Gastrocnemius medialis (tissue), 4 donors: ENCODE measurements at regions of chr16 and their contacts with region 1.

Region 1: DNA sequence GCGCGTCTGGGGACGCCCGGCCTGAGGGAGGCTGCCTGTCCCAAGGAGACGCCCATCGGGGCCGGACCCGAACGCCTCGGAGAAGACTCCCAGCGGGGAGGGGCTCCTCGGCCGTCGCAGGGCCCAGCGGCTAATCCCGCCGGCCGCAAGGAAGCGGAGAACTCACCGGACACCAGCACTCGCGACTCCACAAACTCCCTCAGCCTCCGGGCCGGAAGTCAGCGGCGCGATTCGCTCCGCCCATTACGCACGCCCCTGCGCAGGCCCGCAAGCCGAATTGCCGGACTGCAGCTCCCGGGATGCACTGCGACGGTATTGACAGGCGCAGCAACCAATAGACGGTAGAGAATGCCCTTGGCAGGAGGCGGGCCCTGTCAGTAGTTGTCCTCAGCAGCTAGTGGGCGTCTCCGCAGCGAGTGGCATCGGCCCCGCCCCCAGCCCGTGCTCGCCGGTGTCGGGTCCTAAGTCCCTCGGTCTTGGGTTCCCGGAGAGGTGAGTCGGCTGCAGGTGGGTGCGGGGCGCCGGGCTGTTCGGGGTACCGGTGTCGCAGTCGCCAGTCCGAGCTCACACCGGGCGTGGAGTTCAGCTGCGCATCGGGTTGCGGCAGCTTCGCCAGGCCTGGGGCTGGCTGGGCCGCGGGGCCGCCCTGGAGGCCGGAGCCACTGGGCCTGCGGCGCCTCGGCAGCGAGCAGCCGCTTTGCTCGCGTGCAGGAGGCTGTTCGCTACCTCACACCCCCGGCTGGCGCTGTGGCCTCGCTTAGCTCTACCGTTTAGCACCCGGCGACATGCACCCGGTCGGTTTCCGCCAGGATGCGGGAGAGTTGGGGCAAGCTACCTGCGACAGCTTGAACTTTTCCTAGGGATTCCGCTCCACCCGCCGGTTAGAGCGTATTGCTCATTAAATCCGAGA is at the starts of genes ZNF174 and ZSCAN32:
- DNase-seq: peak; percentile 99
- ATAC-seq: peak; percentile 99
- H3K4me3 ChIP-seq: peak within 1 kb of the TSS; percentile 83 to 92 (median 90)
- H3K27ac ChIP-seq: peak within 1 kb of the TSS; percentile 81 to 92 (median 90)
- H3K4me1 ChIP-seq: peaks cover 16 to 21% of the 10 kb centered on the region in 2 donors
- H3K27me3 ChIP-seq: no peaks in the 10 kb centered on the region
- CTCF ChIP-seq: peak in 1 of 5 experiments; percentile 23
- POLR2A ChIP-seq: peak; percentile 64 to 70
- total RNA-seq, gene ZNF174: 6.7 to 15.6 (median 9.6) TPM
- total RNA-seq, gene ZSCAN32: 4.0 to 6.5 (median 4.7) TPM

Region 2: GRCh38 chr16:3234543-3235541 is 166.2 kb before region 1 on chr16 and contains the start of gene ZNF200:
- in situ Hi-C with region 1: no loop called
- intact Hi-C with region 1: loop called (anchors 2 kb)
- DNase-seq: peak; percentile 93 to 94
- ATAC-seq: peak; percentile 99 to 100
- H3K4me3 ChIP-seq: peak within 1 kb of the TSS; percentile 87 to 100 (median 99)
- H3K27ac ChIP-seq: peak within 1 kb of the TSS; percentile 96 to 100 (median 98)
- H3K4me1 ChIP-seq: peaks cover 12% of the 10 kb centered on the region in 2 donors
- H3K27me3 ChIP-seq: no peaks in the 10 kb centered on the region
- CTCF ChIP-seq: no peak
- POLR2A ChIP-seq: peak; percentile 60 to 72
- total RNA-seq, gene ZNF200: 0.49 to 3.2 (median 2.2) TPM

Region 3: GRCh38 chr16:3282730-3283524 is 118.1 kb before region 1 on chr16 and contains the start of gene ZNF263:
- in situ Hi-C with region 1: loop called in 1 of 4 experiments (anchors 25 kb)
- intact Hi-C with region 1: loop called (anchors 2 kb)
- DNase-seq: peak; percentile 95 to 97
- ATAC-seq: peak; percentile 99
- H3K4me3 ChIP-seq: peak within 1 kb of the TSS; percentile 72 to 86 (median 80)
- H3K27ac ChIP-seq: peak within 1 kb of the TSS; percentile 98 to 100 (median 99)
- H3K4me1 ChIP-seq: peaks cover 22% of the 10 kb centered on the region in 2 donors
- H3K27me3 ChIP-seq: no peaks in the 10 kb centered on the region
- CTCF ChIP-seq: no peak
- POLR2A ChIP-seq: peak; percentile 66 to 81
- total RNA-seq, gene ZNF263: 13.5 to 18.5 (median 15.5) TPM

Region 4: GRCh38 chr16:3364774-3365427 is 36.1 kb before region 1 on chr16:
- in situ Hi-C with region 1: no loop called
- intact Hi-C with region 1: loop called (anchors 2 kb)
- DNase-seq: peak; percentile 53 to 71
- ATAC-seq: peak; percentile 82 to 87
- H3K4me3 ChIP-seq: peak overlapping the region; percentile 33 to 61 (median 58)
- H3K27ac ChIP-seq: peak overlapping the region; percentile 67 to 76 (median 73)
- H3K4me1 ChIP-seq: no peaks in the 10 kb centered on the region
- H3K27me3 ChIP-seq: no peaks in the 10 kb centered on the region
- CTCF ChIP-seq: no peak
- POLR2A ChIP-seq: no peak

Region 5: DNA sequence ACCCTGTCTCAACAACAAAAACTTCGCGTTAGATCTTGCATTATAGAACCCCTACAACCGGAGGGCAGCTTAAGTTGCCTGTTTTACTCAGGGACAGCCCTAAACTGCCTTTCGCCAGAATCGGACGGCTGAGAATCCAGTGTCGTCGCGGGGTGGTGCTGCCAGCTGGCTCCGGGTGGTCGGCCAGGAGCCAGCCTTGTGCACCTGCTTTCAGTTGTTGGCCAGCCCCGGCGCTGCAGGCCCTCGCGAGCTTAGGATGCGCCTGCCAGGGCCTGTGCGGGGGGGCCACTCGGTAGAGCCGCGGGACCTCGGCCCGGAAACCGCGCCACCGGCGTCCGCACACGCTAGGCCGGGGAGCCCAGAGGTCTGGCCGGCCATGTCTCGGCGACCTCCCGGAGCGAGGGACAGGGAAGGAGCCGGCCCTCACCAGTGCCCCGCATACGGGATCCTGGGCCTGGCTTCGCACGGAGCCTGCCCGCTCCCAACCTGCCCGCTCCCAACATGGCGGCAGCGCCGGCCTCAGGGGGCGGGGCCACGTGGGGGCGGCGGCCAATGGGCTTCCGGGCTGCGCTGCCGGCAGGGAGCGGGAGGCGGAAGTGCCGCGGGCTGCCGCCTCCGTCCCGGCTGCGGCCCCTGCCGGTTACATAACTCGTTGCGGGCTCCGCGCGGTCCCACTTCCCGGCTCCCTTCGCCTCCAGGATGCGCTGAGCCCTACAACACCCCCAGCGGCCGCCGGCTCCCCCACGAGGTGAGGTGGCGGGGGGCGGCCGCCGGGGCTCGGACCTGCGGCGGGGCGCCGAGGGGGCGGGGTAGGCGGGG is 56.6 kb after region 1 on chr16:
- in situ Hi-C with region 1: no loop called
- intact Hi-C with region 1: loop called (anchors 1 kb)
- DNase-seq: peak; percentile 86 to 95
- ATAC-seq: peak; percentile 86 to 87
- H3K4me3 ChIP-seq: peak overlapping the region; percentile 73 to 93 (median 80)
- H3K27ac ChIP-seq: peak overlapping the region; percentile 94 to 99 (median 97)
- H3K4me1 ChIP-seq: peaks cover 60 to 67% of the 10 kb centered on the region in 2 donors
- H3K27me3 ChIP-seq: no peaks in the 10 kb centered on the region
- CTCF ChIP-seq: peak in 4 of 5 experiments; percentile 16 to 71 (median 50)
- POLR2A ChIP-seq: peak; percentile 48 to 66

Region 6: DNA sequence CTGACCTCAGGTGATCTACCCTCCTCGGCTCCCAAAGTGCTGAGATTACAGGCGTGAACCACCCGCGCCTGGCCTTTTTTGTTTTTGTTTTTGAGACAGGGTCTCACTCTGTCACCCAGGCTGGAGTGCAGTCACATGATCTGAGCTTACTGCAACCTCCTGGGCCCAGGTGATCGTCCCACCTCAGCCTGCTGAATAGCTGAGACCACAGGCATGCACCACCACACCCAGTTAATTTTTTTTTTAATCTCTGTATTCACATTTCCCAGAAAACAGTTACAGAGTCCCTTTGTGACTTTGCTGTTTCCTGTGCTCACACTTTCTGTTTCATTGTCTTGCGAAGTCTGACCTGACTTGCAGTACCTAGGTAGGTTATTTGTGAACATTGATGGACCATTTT is 102.5 kb after region 1 on chr16:
- in situ Hi-C with region 1: loop called in 1 of 4 experiments (anchors 10 kb)
- intact Hi-C with region 1: loop called (anchors 1 kb)
- DNase-seq: no peak
- ATAC-seq: no peak
- H3K4me3 ChIP-seq: no peak overlapping the region
- H3K27ac ChIP-seq: no peak overlapping the region
- H3K4me1 ChIP-seq: peaks cover 6 to 15% of the 10 kb centered on the region in 2 donors
- H3K27me3 ChIP-seq: no peaks in the 10 kb centered on the region
- CTCF ChIP-seq: no peak
- POLR2A ChIP-seq: no peak